Dorsolateral prefrontal cortex (tissue), 120 donors: ENCODE measurements at regions of chr20 and their contacts with region 1.

Region 1: GRCh38 chr20:45436732-45437391 is 20.9 kb downstream of the PIGT start:
- DNase-seq: peak; percentile 87 to 95 (median 92)
- H3K4me3 ChIP-seq: peak overlapping the region; percentile 41 to 82 (median 67)
- H3K27ac ChIP-seq: peak overlapping the region; percentile 34 to 100 (median 94)
- H3K27me3 ChIP-seq: no peaks in the 10 kb centered on the region
- CTCF ChIP-seq: peak; percentile 96 to 100 (median 99)

Region 2: GRCh38 chr20:45322952-45323383 is 113.9 kb before region 1 on chr20:
- intact Hi-C with region 1: loop called (anchors 5 kb)
- DNase-seq: peak in 8 of 10 donors; percentile 40 to 78 (median 66)
- H3K4me3 ChIP-seq: no peak overlapping the region
- H3K27ac ChIP-seq: peak overlapping the region in 12 of 59 donors; percentile 6 to 56 (median 23)
- H3K27me3 ChIP-seq: no peaks in the 10 kb centered on the region
- CTCF ChIP-seq: peak in 54 of 56 donors; percentile 19 to 80 (median 58)

Region 3: DNA sequence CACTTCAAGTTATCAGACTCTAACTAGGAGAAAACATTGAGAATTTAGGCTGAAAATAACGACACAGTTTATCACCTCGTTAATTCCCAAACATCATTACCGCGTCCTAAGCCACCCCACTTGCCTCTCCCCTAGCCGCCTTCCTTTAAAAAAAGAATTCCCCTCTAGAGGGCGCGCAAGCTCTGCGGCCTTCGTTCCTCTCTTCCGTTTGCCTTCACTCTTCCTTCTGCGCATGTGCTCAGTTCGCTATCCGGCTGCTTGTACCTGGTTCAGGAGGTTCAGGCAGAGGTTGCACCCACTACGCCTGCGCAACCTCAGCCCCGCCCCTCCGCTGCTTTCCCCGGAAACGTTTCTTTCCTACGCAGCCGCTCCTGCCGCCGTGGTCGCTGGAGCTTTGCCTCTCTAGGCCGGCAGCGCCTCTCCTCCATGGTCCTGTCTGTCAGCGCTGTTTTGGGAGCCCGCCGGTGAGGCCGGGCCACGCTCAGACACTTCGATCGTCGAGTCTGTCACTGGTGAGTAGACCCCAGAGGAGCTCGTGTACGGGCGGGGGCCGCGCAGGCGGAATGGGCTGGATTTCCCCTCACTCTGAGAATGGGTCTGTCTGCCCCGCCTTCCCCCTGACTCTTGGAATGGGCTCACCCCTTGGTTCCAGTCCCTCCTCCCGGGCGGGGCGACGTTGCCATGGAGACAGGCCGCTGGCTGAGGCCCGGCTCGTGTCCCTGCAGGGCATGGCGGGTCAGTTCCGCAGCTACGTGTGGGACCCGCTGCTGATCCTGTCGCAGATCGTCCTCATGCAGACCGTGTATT is 73.9 kb before region 1 on chr20 and contains the start of gene SYS1:
- intact Hi-C with region 1: loop called in 1 of 2 experiments (anchors 2 kb)
- DNase-seq: peak; percentile 96 to 98 (median 96)
- H3K4me3 ChIP-seq: peak within 1 kb of the TSS; percentile 48 to 99 (median 81)
- H3K27ac ChIP-seq: peak within 1 kb of the TSS; percentile 64 to 99 (median 96)
- H3K27me3 ChIP-seq: no peaks in the 10 kb centered on the region
- CTCF ChIP-seq: peak; percentile 85 to 99 (median 95)
- total RNA-seq, gene SYS1: 19.5 to 49.7 (median 29.3) TPM

Region 4: GRCh38 chr20:45373353-45374100 is 63.3 kb before region 1 on chr20:
- intact Hi-C with region 1: loop called (anchors 1 kb)
- DNase-seq: peak; percentile 79 to 92 (median 87)
- H3K4me3 ChIP-seq: peak overlapping the region; percentile 34 to 74 (median 59)
- H3K27ac ChIP-seq: peak overlapping the region; percentile 33 to 97 (median 90)
- H3K27me3 ChIP-seq: no peaks in the 10 kb centered on the region
- CTCF ChIP-seq: peak; percentile 71 to 98 (median 92)

Region 5: GRCh38 chr20:45392733-45393132 is 44.1 kb before region 1 on chr20:
- intact Hi-C with region 1: loop called (anchors 5 kb)
- DNase-seq: no peak
- H3K4me3 ChIP-seq: no peak overlapping the region
- H3K27ac ChIP-seq: peak overlapping the region in 54 of 59 donors; percentile 5 to 85 (median 66)
- H3K27me3 ChIP-seq: no peaks in the 10 kb centered on the region
- CTCF ChIP-seq: peak in 53 of 56 donors; percentile 18 to 75 (median 50)

Region 6: GRCh38 chr20:45406259-45407066 is 30.4 kb before region 1 on chr20:
- intact Hi-C with region 1: loop called (anchors 1 kb)
- DNase-seq: peak in 9 of 10 donors; percentile 43 to 85 (median 68)
- H3K4me3 ChIP-seq: peak overlapping the region; percentile 65 to 97 (median 89)
- H3K27ac ChIP-seq: peak overlapping the region; percentile 89 to 100 (median 99)
- H3K27me3 ChIP-seq: no peaks in the 10 kb centered on the region
- CTCF ChIP-seq: peak in 19 of 56 donors; percentile 4 to 37 (median 21)